Endothelial cell of umbilical vein (primary cell): ENCODE measurements at regions of chr17 and their contacts with region 1.

Region 1: DNA sequence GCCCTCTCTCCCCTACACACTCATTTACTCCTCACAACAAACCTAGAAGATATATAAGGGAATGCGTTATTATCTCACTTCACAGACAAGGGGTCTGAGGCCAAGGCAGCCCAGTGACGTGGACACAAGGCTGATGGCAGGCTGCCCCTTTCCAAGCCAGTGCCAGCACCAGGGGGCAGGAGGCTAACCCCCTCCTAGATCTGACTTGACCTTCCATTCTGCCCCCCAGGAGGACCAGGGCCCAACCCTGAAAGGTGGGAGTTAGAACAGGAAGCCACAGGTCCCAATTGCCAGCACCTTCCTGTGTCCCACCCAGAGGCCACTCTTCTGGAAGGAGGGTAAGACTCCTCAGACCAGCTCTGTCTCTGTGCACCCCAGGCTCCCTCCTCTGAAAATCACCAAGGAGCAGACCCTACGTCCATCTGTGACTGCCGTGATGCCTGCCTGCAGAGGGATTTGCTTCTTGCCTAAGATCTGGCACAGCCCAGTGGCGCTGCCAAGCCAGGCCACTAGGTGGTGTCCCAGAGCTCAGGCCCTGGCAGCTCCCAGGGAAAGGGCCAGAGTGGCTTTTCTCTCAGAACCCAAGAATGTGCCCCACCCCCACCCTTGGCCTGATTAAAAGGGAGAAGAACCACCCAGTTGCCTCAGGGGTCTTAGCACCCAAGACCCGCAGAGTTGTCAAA is 42.4 kb upstream of the MRPS23 start:
- DNase-seq: peak; percentile 87
- H3K4me3 ChIP-seq: no peak overlapping the region
- H3K27ac ChIP-seq: peak overlapping the region; percentile 70
- H3K4me1 ChIP-seq: peaks cover 26% of the 10 kb centered on the region
- H3K27me3 ChIP-seq: no peaks in the 10 kb centered on the region
- CTCF ChIP-seq: peak; percentile 99
- POLR2A ChIP-seq: no peak

Region 2: DNA sequence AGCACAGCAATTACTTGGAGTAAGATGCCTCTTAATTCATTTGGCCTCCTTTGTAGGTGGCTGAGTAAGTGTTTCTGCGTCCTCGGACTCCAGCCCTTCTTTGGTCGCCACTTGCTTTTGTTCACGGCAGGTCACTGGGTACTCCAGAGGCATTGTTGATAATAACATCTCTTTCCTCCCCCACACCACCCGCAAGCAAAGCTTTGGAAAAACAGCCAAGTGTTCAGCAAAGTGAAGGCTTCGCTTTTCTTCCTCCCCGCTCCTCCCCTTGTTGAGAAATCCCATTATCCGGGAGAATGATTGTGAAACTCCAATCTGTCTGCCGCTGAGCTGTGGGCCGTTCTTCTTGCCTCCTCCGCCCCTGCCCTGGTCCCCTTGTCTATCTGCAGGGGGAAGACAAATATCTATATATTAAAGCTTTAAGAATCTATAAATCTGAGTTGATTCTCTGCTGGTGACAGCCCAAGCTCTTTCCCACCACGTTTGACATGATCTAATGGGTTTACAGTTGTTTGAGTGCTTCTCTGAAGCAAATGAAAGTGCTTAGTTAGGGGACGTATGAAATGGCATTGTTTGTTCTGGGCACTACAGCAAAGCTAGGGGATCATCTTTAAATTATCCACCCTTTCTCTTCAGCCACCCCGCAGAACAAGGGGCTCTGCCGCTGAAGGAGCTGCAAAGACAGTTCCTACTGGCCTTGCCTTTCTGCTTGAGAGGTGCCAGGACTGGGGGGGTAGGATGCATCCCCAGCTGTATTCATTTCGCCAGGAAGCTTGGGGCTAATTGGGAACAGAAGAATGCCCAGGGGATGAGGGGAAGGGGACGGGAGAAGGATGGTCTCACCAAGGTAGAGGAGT is 314.3 kb before region 1 on chr17:
- CTCF ChIA-PET with region 1: no interaction called
- POLR2A ChIA-PET with region 1: no interaction called
- dilution Hi-C with region 1: no loop called
- intact Hi-C with region 1: no loop called
- DNase-seq: no peak
- H3K4me3 ChIP-seq: no peak overlapping the region
- H3K27ac ChIP-seq: no peak overlapping the region
- H3K4me1 ChIP-seq: no peaks in the 10 kb centered on the region
- H3K27me3 ChIP-seq: no peaks in the 10 kb centered on the region
- CTCF ChIP-seq: no peak
- POLR2A ChIP-seq: no peak

Region 3: GRCh38 chr17:57855391-57856035 is 36.8 kb before region 1 on chr17:
- CTCF ChIA-PET with region 1: interaction called, 34 read pairs
- POLR2A ChIA-PET with region 1: no interaction called
- dilution Hi-C with region 1: no loop called
- intact Hi-C with region 1: loop called (anchors 1 kb)
- DNase-seq: no peak
- H3K4me3 ChIP-seq: no peak overlapping the region
- H3K27ac ChIP-seq: no peak overlapping the region
- H3K4me1 ChIP-seq: peaks cover 7% of the 10 kb centered on the region
- H3K27me3 ChIP-seq: no peaks in the 10 kb centered on the region
- CTCF ChIP-seq: no peak
- POLR2A ChIP-seq: no peak

Region 4: DNA sequence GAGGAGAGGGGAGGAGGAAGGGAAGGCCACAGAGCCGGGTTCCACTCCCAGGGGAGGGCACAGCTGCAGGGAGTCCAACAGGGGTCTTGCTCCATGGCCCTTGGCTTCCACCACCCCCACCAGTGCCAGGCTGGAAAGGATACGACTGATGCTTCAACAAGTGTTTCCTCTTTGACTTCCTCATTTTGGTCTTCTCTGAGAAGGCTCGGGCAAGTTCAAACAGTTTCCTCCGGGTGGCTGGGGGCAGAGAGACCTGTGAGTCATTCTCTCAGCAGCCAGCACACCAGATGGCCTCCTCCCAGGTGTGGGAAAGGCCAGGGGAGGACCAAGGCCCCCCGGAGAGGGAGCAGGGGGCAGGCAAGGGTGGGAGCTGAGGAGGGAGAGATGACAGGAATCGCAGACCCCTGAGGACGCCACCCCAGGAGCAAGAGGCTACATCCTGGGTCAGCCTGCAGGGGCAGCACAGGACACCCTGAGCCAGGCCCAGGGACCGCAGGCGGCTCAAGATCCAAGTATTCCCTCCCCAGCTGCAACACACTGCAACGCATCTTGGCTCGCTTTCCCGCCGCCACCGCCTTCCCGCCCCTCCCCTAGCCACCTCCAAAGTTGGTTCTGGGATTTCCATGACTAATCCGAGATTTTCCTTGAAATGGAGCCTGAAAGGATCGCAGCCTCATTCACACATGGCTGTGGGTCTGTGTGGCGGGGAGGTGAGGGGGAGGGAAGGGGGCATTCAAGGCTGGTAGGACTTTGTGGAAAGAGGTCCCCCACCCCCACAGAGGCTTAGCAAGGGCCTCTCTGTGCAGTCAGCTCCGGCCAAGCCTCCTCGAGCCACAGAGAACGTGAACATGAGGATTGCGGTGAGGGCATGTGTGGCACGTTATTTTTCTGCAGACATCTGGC is 24.0 kb before region 1 on chr17:
- CTCF ChIA-PET with region 1: interaction called, 67 read pairs
- POLR2A ChIA-PET with region 1: no interaction called
- dilution Hi-C with region 1: no loop called
- intact Hi-C with region 1: no loop called
- DNase-seq: peak; percentile 91
- H3K4me3 ChIP-seq: no peak overlapping the region
- H3K27ac ChIP-seq: peak overlapping the region; percentile 44
- H3K4me1 ChIP-seq: peaks cover 35% of the 10 kb centered on the region
- H3K27me3 ChIP-seq: no peaks in the 10 kb centered on the region
- CTCF ChIP-seq: peak in 1 of 2 donors; percentile 53
- POLR2A ChIP-seq: no peak

Region 5: DNA sequence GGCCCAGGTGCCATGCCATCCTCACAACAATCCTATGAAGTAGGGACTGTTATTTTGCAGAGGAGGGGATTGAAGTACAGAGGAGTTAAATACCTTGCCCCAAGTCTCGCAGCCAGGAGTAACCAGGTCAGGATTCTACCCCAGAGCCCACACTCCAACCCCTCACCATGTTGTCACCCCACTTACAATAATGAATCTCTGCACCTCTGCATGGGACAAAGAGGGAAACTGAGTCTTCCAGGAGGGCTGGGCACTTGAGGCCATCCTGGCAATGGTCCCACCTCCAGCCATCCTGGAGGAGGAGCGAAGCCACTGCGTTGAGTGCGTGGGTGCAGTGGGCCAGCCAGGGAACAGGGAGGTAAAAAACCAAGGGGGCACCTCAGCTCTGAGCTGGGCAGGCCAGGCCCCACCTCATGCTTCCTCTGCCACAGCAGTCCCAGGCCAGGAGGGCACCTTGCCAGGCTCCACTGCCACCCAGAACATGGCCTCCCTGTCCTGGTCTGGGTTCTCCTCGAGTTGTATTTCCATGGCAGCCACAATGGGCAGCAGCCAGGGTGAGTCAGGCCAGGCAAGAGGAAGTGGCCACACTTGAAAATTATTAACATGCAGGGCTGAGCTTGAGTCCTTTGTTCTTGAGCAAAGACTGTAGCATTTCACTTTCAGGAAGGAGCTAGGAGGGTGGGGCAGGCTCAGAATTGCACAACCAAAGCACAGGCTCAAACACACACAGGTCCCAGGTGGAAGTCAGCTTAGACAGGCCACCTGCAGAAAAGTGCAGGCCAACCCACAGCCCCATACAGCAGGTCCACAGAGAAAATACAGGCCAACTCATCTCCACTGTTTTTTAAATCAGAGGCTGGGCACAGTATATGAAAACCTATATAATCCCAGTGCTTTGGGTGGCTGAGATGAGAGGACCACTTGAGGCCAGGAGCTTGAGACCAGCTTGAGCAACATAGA is 10.8 kb after region 1 on chr17:
- CTCF ChIA-PET with region 1: interaction called, 7 read pairs
- POLR2A ChIA-PET with region 1: no interaction called
- dilution Hi-C with region 1: no loop called
- intact Hi-C with region 1: loop called (anchors 1 kb)
- DNase-seq: peak; percentile 80
- H3K4me3 ChIP-seq: no peak overlapping the region
- H3K27ac ChIP-seq: peak overlapping the region; percentile 71
- H3K4me1 ChIP-seq: peaks cover 19% of the 10 kb centered on the region
- H3K27me3 ChIP-seq: no peaks in the 10 kb centered on the region
- CTCF ChIP-seq: no peak
- POLR2A ChIP-seq: no peak

Region 6: DNA sequence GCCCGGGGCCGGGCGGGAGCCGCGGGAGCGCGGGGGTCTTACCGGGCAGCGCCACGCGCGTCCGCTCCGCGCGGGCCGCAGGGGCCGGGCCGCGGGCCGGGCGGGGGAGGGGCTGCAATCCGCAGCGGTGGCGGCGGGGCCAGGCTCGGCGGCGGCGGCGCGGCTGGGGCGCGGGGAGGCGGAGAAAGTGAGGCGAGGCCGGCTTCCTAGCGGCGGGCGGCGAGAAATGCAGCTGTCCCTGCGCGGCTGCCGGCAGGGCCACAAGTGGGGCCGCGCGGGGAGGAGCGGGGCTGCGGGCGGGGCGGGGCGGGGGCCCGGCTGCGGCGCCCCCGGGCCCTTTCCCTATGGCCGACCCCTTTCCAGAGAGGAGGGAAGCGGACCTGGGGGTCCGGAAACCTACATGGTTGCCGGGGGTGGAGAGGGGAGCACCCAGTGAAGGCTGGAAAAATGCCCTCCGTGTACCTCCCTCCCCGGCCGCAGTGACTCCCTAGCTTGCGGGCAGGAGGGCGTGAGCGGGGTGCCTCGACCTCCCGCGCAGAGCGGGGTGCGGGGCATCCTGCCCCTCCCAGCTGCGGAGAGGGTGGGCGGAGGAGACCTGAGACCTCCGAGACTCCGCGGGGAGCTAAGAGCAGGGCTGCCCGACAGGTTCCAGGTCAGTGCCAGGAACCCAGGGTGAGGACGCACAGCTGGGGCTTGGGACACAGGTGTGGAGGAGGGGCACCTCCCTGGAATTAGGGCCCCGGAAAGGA is 63.1 kb after region 1 on chr17 and contains the start of gene CUEDC1:
- CTCF ChIA-PET with region 1: interaction called, 35 read pairs
- POLR2A ChIA-PET with region 1: interaction called, 3 read pairs
- dilution Hi-C with region 1: no loop called
- intact Hi-C with region 1: loop called (anchors 1 kb)
- DNase-seq: peak; percentile 56
- H3K4me3 ChIP-seq: peak within 1 kb of the TSS; percentile 57 to 88 (median 77)
- H3K27ac ChIP-seq: peak within 1 kb of the TSS; percentile 44
- H3K4me1 ChIP-seq: peaks cover 36% of the 10 kb centered on the region
- H3K27me3 ChIP-seq: peaks cover 2 to 7% of the 10 kb centered on the region in 2 experiments
- CTCF ChIP-seq: peak in 1 of 2 donors; percentile 43
- POLR2A ChIP-seq: peak; percentile 23
- total RNA-seq, gene CUEDC1: 27.7 and 28.5 TPM in 2 replicates

Region 7: GRCh38 chr17:58112970-58113631 is 220.8 kb after region 1 on chr17:
- CTCF ChIA-PET with region 1: no interaction called
- POLR2A ChIA-PET with region 1: no interaction called
- dilution Hi-C with region 1: no loop called
- intact Hi-C with region 1: loop called (anchors 1 kb)
- DNase-seq: peak; percentile 69
- H3K4me3 ChIP-seq: no peak overlapping the region
- H3K27ac ChIP-seq: no peak overlapping the region
- H3K4me1 ChIP-seq: no peaks in the 10 kb centered on the region
- H3K27me3 ChIP-seq: peaks cover 4 to 5% of the 10 kb centered on the region in 2 experiments
- CTCF ChIP-seq: peak; percentile 84 to 89
- POLR2A ChIP-seq: no peak